ENCODE measurements at regions of chr4 and their contacts with region 1.

Region 1: GRCh38 chr4:119504616-119505015 is 124.0 kb downstream of the PDE5A start:
- DNase-seq: peak; percentile 67
- ATAC-seq: peak; percentile 45
- H3K4me3 ChIP-seq: no peak overlapping the region; a peak in 1 of 6 replicates
- H3K27ac ChIP-seq: peak overlapping the region; percentile 72
- H3K4me1 ChIP-seq: peaks cover 57% of the 10 kb centered on the region
- H3K27me3 ChIP-seq: no peaks in the 10 kb centered on the region
- CTCF ChIP-seq: no peak
- EP300 ChIP-seq: no peak; a peak in 1 of 4 replicates
- POLR2A ChIP-seq: no peak
- RAD21 ChIP-seq: no peak

Region 2: GRCh38 chr4:119540249-119540648 is 35.6 kb after region 1 on chr4:
- CTCF ChIA-PET with region 1: no interaction called
- POLR2A ChIA-PET with region 1: no interaction called
- in situ Hi-C with region 1: no loop called
- intact Hi-C with region 1: loop called (anchors 1 kb)
- DNase-seq: no peak
- ATAC-seq: no peak
- H3K4me3 ChIP-seq: no peak overlapping the region
- H3K27ac ChIP-seq: no peak overlapping the region
- H3K4me1 ChIP-seq: peaks cover 19% of the 10 kb centered on the region
- H3K27me3 ChIP-seq: no peaks in the 10 kb centered on the region
- CTCF ChIP-seq: no peak
- EP300 ChIP-seq: no peak
- POLR2A ChIP-seq: no peak
- RAD21 ChIP-seq: no peak

Region 3: GRCh38 chr4:119897260-119897659 is 392.6 kb after region 1 on chr4:
- CTCF ChIA-PET with region 1: no interaction called
- POLR2A ChIA-PET with region 1: no interaction called
- in situ Hi-C with region 1: no loop called
- intact Hi-C with region 1: no loop called
- DNase-seq: no peak
- ATAC-seq: no peak
- H3K4me3 ChIP-seq: no peak overlapping the region
- H3K27ac ChIP-seq: no peak overlapping the region
- H3K4me1 ChIP-seq: no peaks in the 10 kb centered on the region
- H3K27me3 ChIP-seq: no peaks in the 10 kb centered on the region
- CTCF ChIP-seq: no peak
- EP300 ChIP-seq: no peak
- POLR2A ChIP-seq: no peak
- RAD21 ChIP-seq: no peak

Measured in HepG2 (cell line).